H1 (cell line): ENCODE measurements at regions of chr12 and their contacts with region 1.

Region 1: GRCh38 chr12:50038336-50038735 is 13.0 kb upstream of the RACGAP1 start:
- DNase-seq: no peak
- H3K4me3 ChIP-seq: no peak overlapping the region
- H3K27ac ChIP-seq: no peak overlapping the region
- H3K4me1 ChIP-seq: no peaks in the 10 kb centered on the region
- H3K27me3 ChIP-seq: no peaks in the 10 kb centered on the region; a peak in 1 of 7 replicates
- CTCF ChIP-seq: no peak
- EP300 ChIP-seq: no peak
- POLR2A ChIP-seq: no peak
- RAD21 ChIP-seq: no peak

Region 2: GRCh38 chr12:50025187-50026059 is 12.9 kb before region 1 on chr12 and contains the start of gene RACGAP1:
- CTCF ChIA-PET with region 1: interaction called, 37 read pairs
- POLR2A ChIA-PET with region 1: no interaction called
- DNase-seq: peak; percentile 90 to 94
- H3K4me3 ChIP-seq: peak within 1 kb of the TSS; percentile 81 to 86 (median 82)
- H3K27ac ChIP-seq: no peak within 1 kb of the TSS
- H3K4me1 ChIP-seq: no peaks in the 10 kb centered on the region
- H3K27me3 ChIP-seq: no peaks in the 10 kb centered on the region
- CTCF ChIP-seq: no peak
- EP300 ChIP-seq: no peak
- POLR2A ChIP-seq: no peak; a peak in 1 of 3 replicates
- RAD21 ChIP-seq: no peak
- total RNA-seq, gene RACGAP1: 63.5 and 66.3 TPM in 2 replicates